Aorta (tissue), 5 donors: ENCODE measurements at regions of chr20 and their contacts with region 1.

Region 1: GRCh38 chr20:36199345-36200257 is 36.7 kb upstream of the AAR2 start:
- DNase-seq: peak; percentile 83 to 88
- ATAC-seq: peak; percentile 78
- H3K4me3 ChIP-seq: no peak overlapping the region
- H3K27ac ChIP-seq: no peak overlapping the region
- H3K4me1 ChIP-seq: no peaks in the 10 kb centered on the region
- H3K27me3 ChIP-seq: no peaks in the 10 kb centered on the region

Region 2: DNA sequence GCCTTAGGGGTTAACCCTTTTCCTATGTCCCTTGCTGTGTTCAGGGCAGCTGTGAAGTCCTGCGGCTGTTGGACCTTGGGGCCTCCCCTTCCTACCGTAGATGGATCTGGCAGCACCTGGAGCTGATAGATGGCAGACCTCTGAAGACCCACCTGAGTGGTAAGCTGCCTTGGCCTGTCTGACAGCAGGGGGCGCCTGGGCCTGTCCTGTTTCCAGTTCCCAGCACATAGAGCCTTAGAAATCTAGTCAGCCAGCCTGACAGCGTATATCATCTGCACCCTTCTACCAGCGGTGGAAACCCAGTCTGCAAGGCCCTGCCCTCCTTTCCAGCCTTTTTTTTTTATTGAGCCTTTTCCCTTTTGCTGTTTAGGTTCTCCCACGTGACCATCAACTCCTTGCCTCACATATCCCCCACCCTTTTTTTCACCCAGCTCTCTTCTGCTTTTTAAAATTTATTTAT is 204.6 kb before region 1 on chr20:
- intact Hi-C with region 1: loop called (anchors 5 kb)
- DNase-seq: peak; percentile 89 to 94
- ATAC-seq: peak; percentile 92
- H3K4me3 ChIP-seq: no peak overlapping the region
- H3K27ac ChIP-seq: no peak overlapping the region
- H3K4me1 ChIP-seq: no peaks in the 10 kb centered on the region
- H3K27me3 ChIP-seq: no peaks in the 10 kb centered on the region

Region 3: DNA sequence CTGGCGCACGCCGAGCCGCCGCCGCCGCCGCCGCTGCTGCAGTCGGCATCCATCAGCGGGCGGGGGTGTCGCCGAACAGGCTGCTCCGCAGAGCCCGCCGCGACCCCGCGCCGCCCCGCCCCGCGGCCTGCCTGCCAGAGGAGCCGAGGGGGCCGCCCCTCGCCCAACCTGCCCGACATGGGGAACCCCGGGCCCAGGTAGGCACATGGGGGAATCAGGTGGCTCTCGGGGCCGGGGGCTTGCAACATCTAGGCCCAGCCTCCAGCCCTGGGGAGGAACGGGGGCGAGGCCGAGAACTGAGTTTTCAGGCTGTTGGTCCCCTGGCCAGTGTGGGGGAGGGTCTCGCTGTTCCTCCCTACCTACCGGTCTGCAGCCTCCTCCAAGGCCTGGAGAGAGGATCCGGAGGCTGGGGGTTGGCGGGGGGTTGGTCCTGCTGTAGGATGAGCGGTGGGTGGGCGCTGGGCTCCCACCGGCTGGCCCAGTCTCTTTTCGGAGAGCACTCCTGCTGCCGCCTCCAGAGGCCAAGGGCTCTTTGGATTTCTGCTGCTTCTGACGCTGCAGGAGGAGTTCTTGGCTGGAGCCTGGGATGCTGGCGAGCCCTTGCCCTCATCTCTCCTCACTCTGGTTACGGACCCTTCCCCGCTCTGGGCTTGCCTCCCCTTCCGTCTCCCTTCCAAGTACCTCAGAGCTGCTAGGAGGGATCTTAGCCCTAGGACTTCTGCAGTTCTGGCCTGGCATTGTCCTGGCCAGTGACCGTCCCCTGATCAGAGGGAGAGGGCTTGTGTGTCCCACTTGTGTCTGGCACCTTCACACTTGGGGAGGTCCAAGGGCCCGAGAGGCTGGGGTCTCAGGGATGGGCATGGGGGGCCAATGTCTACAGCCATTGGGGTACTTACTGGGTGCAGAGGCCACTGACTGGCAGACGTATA is 44.6 kb before region 1 on chr20 and contains the start of gene EPB41L1:
- intact Hi-C with region 1: loop called (anchors 2 to 5 kb)
- DNase-seq: peak in 1 of 2 donors; percentile 57
- ATAC-seq: peak; percentile 20
- H3K4me3 ChIP-seq: peak within 1 kb of the TSS; percentile 53 to 54
- H3K27ac ChIP-seq: peak within 1 kb of the TSS; percentile 32 to 50
- H3K4me1 ChIP-seq: no peaks in the 10 kb centered on the region
- H3K27me3 ChIP-seq: no peaks in the 10 kb centered on the region
- total RNA-seq, gene EPB41L1: 38.6 to 47.1 TPM

Region 4: GRCh38 chr20:36248836-36249235 is 49.2 kb after region 1 on chr20:
- intact Hi-C with region 1: no loop called
- DNase-seq: no peak
- ATAC-seq: no peak
- H3K4me3 ChIP-seq: no peak overlapping the region
- H3K27ac ChIP-seq: no peak overlapping the region
- H3K4me1 ChIP-seq: no peaks in the 10 kb centered on the region
- H3K27me3 ChIP-seq: no peaks in the 10 kb centered on the region

Region 5: GRCh38 chr20:36411861-36412454 is 212.4 kb after region 1 on chr20:
- intact Hi-C with region 1: no loop called
- DNase-seq: no peak
- ATAC-seq: no peak
- H3K4me3 ChIP-seq: no peak overlapping the region
- H3K27ac ChIP-seq: no peak overlapping the region
- H3K4me1 ChIP-seq: no peaks in the 10 kb centered on the region
- H3K27me3 ChIP-seq: no peaks in the 10 kb centered on the region

Region 6: DNA sequence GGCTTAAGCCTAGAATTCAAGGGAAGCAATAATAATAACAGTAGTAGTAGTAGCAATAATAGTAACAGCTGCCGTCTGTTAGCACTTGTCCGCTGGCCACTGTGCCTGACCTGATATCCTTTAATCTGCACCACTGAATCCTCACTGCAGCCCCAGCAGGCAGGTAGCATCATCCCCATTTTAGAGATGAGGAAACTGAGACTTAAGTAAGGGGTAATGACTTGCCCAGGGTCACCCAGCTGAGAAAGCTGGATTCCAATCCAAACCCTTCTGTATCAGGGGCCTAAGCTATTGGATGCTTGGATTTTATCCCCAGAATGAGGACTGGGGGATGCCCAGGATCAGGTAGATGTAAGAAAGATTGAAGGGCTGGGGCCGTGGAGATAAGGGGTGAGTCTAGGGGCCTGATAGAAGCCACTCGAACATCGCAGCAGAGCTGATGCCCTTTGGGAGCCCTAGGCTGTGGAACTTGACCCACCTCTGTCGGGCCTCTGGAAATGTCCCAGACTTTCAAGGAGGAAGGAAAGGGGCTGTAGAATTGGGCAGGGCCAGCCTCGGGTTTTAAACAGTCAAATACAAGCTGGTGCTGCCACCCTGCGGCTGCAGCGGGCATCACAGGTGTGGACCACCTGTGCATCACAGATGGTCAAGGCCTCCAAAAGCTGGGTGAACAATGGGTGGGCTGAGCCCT is 239.6 kb after region 1 on chr20:
- intact Hi-C with region 1: loop called (anchors 2 to 5 kb)
- DNase-seq: peak; percentile 75 to 87
- ATAC-seq: no peak
- H3K4me3 ChIP-seq: no peak overlapping the region
- H3K27ac ChIP-seq: no peak overlapping the region
- H3K4me1 ChIP-seq: no peaks in the 10 kb centered on the region
- H3K27me3 ChIP-seq: no peaks in the 10 kb centered on the region

Region 7: DNA sequence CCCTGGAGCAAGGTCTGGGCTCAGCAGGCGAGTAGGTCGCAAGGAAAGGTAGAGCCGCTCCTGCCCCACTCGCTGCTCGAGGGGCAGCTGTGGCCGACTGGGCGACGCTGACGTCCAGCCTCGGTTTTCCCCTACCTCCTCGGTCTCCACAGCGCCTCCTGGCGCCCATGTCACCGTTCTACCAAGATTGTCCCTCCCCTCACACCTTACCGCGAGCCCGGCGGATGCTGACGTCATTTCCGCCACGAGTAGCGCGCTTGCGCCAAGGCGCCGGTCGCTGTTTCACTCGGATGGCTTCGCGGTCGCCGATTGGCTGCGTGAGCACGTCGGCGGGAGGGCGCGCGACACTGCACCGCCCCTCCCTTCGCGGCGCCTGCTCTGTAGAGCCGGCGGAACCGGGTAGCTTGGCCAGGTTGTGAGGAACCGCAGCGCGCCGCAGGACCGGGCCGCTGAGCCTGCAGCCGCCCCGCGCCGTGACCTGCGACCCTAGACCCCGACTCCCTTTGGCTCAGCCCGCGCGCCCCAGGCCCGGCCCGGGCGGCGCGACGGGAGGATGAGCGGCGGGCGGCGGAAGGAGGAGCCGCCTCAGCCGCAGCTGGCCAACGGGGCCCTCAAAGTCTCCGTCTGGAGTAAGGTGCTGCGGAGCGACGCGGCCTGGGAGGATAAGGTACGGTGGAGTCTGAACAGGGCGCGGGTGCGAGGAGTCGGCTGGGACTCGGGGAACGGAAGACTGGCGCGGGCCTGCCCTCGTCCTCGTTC is 406.0 kb after region 1 on chr20 and contains the start of gene RAB5IF:
- intact Hi-C with region 1: loop called in 1 of 2 experiments (anchors 10 kb)
- DNase-seq: peak; percentile 100
- ATAC-seq: peak; percentile 99
- H3K4me3 ChIP-seq: peak within 1 kb of the TSS; percentile 57 to 95
- H3K27ac ChIP-seq: peak within 1 kb of the TSS in 1 of 2 donors; percentile 66
- H3K4me1 ChIP-seq: peaks cover 0 to 6% of the 10 kb centered on the region in 2 donors
- H3K27me3 ChIP-seq: no peaks in the 10 kb centered on the region
- total RNA-seq, gene RAB5IF: 39.8 to 48.1 TPM